HepG2 (cell line): ENCODE measurements at regions of chr17 and their contacts with region 1.

Region 1: GRCh38 chr17:14038206-14038605 is 31.1 kb upstream of the COX10 start:
- DNase-seq: no peak
- ATAC-seq: no peak
- H3K4me3 ChIP-seq: no peak overlapping the region
- H3K27ac ChIP-seq: no peak overlapping the region
- H3K4me1 ChIP-seq: no peaks in the 10 kb centered on the region
- H3K27me3 ChIP-seq: no peaks in the 10 kb centered on the region
- CTCF ChIP-seq: no peak
- EP300 ChIP-seq: no peak
- POLR2A ChIP-seq: no peak
- RAD21 ChIP-seq: no peak

Region 2: DNA sequence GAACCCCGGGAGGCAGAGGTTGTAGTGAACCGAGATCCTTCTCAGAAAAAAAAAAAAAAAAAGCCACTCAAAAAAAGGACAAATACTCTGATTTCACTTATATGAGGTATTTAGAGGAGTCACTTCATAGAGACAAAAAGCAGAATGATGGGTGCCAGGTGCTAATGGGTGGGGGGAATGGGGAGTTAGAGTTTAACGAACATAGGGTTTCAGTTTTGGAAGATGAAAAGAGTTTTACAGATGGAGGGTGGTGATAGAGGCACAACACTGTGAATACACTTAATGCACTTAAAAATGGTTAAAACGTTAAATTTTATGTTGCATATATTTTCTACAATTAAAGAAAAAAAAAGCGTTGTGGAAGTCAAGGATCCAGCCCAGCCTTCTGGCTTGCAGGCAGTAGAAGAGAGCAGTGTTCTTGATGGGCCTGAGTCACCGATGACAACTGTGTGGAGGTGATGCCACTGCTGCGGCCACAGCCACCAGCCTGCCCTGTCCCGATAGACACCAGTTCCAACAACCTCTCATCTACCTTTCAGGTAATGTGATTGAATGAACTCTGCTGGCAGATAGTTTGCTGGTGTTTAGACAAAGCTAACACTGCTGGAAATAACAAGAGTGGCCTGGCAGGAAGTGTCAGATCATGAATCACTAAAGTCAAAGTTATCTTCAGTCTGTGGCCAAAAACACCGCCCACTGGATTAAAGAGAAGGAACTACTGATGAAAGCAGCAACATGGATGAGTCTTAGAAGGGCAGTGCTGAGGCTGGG is 18.8 kb before region 1 on chr17:
- CTCF ChIA-PET with region 1: no interaction called
- POLR2A ChIA-PET with region 1: no interaction called
- in situ Hi-C with region 1: no loop called
- intact Hi-C with region 1: no loop called
- DNase-seq: no peak
- ATAC-seq: no peak
- H3K4me3 ChIP-seq: no peak overlapping the region
- H3K27ac ChIP-seq: no peak overlapping the region
- H3K4me1 ChIP-seq: peaks cover 9% of the 10 kb centered on the region; the same call in 1 of the 2 replicates
- H3K27me3 ChIP-seq: no peaks in the 10 kb centered on the region
- CTCF ChIP-seq: no peak
- EP300 ChIP-seq: no peak
- POLR2A ChIP-seq: no peak
- RAD21 ChIP-seq: no peak

Region 3: DNA sequence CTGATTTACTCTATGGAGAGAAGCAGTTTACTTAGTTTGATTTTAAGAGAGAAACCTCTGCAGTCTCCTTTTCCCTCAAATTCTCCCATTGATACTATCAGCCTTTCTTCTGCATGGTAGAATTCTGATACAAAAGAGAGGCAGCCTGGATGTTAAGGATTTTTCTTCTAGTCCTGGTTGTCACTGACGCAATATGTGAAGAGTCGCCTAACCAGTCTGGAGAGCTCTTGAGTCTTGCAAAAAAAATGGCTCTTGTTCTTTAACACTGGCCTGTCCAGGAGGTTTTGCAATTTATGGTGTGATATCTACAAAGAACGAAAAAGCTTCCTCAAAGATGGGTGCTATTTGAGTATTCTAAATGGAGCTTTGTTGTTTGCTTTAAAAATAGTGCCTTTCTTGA is 60.0 kb after region 1 on chr17:
- CTCF ChIA-PET with region 1: no interaction called
- POLR2A ChIA-PET with region 1: no interaction called
- in situ Hi-C with region 1: loop called (anchors 10 kb)
- intact Hi-C with region 1: no loop called
- DNase-seq: no peak
- ATAC-seq: no peak
- H3K4me3 ChIP-seq: no peak overlapping the region
- H3K27ac ChIP-seq: no peak overlapping the region
- H3K4me1 ChIP-seq: peaks cover 23% of the 10 kb centered on the region
- H3K27me3 ChIP-seq: no peaks in the 10 kb centered on the region
- CTCF ChIP-seq: no peak
- EP300 ChIP-seq: no peak
- POLR2A ChIP-seq: no peak
- RAD21 ChIP-seq: no peak